ENCODE measurements at regions of chr9 and their contacts with region 1.

Region 1: GRCh38 chr9:111597817-111598729 is 1.4 kb downstream of the PTGR1 start:
- DNase-seq: peak; percentile 63 to 75
- H3K4me3 ChIP-seq: peak overlapping the region; percentile 55
- H3K4me1 ChIP-seq: no peaks in the 10 kb centered on the region; the same call in 1 of the 2 replicates
- H3K27me3 ChIP-seq: no peaks in the 10 kb centered on the region

Region 2: DNA sequence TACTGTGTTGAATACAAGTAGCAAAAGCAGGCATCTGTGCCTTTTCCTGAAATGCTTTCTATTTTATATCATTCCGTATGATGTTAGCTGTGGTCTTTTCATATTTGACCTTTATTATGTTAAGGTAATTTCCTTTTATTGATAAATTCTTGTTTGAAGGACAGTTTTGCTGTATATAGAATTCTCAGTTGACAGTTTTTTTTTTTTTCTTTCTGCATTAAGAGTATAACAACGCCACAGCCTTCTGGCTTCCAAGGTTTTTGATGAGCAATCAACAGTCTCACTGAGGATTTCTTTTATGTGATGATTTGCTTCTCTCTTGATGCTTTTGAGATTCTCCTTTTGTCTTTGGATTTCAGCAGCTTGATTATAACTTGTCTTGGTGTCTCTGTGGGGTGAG is 49.5 kb before region 1 on chr9:
- in situ Hi-C with region 1: no loop called
- DNase-seq: no peak
- H3K4me3 ChIP-seq: no peak overlapping the region
- H3K4me1 ChIP-seq: no peaks in the 10 kb centered on the region
- H3K27me3 ChIP-seq: no peaks in the 10 kb centered on the region

Region 3: GRCh38 chr9:111691672-111692329 is 93.7 kb after region 1 on chr9:
- in situ Hi-C with region 1: loop called (anchors 10 kb)
- DNase-seq: peak in 1 of 2 experiments; percentile 63
- H3K4me3 ChIP-seq: no peak overlapping the region
- H3K4me1 ChIP-seq: peaks cover 13% of the 10 kb centered on the region
- H3K27me3 ChIP-seq: no peaks in the 10 kb centered on the region